CD8-positive, alpha-beta T cell (primary cell): ENCODE measurements at regions of chr5 and their contacts with region 1.

Region 1: DNA sequence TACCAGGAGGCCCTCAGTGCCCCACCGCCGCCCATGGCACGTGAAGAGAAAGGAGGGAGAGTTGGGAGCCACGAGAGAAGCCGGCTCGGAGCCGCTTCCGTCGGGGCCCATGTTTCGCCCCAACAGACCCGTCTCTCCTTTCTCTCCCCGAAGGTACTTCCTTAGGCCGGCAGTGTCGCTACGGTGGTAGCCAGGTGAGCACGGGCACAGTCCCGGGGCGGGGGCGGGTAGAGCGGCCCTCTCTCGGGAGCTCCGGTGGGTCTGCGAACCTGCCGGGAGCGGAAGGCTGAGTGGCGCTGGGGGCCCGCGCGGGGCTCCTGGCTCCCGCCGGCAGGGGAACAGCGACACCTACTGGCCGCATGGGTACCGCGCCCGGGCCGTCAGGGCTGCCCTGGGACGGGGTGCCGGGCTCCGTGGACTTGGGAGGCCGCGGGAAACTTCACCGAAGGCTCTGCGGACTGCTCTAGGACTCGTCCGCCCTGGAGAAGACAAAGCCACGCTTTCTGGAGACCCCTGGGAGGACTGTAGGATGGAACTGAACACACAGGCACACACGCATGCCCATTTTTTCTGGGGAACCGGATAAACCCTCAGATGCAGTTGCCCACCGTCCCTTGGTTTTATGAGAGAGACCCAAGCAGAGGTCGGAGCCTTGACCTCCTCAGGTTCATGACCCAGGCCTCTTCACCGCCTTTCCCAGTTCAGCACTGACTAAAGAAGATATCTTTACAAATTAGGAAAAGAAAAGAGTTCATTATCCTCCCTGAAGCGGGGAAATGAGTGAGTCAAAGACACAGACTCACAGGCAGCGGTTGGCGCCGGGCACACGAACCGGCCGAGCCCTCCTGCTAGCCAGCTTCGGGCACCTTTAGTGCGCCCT is 202.5 kb downstream of the MEF2C start:
- DNase-seq: peak; percentile 59 to 88 (median 78)
- ATAC-seq: peak; percentile 82
- H3K4me3 ChIP-seq: peak overlapping the region; percentile 29 to 36
- H3K4me3 Mint-ChIP-seq: peak overlapping the region; percentile 61
- H3K27ac ChIP-seq: no peak overlapping the region
- H3K27ac Mint-ChIP-seq: no peak overlapping the region
- H3K4me1 ChIP-seq: peaks cover 22% of the 10 kb centered on the region
- H3K4me1 Mint-ChIP-seq: peaks cover 20% of the 10 kb centered on the region
- H3K27me3 ChIP-seq: peaks cover 61 to 62% of the 10 kb centered on the region in 2 experiments
- H3K27me3 Mint-ChIP-seq: peaks cover 75% of the 10 kb centered on the region
- CTCF ChIP-seq: peak; percentile 89

Region 2: DNA sequence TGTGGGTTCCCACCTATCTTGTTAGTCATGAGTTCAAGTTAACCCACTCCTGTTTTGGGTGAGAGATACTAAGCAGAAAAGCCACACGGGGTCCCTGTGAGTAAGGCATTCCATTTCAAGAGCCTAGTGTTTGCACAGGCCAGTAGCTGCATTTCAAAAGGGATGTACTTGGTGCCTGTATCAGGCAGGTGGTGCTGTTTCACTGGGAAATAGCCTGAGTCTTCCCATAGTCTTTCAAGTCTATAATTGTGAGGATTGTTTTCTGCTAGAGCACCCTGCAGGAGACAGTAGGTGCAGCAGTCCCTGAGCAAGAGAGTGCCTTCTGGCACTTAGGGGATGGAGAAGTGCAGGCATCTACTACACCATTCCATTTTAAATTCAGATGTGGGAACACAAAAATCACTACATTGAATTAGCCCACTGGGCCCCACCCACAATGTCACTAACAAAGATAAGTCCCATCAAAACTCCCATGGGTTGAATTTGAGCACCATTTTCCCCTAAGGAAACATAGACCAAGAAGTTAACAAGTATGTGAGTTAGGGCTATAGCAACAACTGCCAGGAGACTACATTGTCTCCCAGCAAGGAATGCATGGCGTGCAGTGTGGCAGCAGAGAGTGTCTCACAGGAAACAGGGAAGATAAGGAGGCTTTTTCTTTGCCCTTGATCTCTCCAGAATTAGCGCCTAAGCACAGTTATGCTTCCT is 1799.6 kb before region 1 on chr5:
- CTCF ChIA-PET with region 1: no interaction called
- POLR2A ChIA-PET with region 1: no interaction called
- intact Hi-C with region 1: loop called in 1 of 2 experiments (anchors 2 kb)
- DNase-seq: peak in 7 of 9 experiments; percentile 1 to 60 (median 16)
- ATAC-seq: peak; percentile 66
- H3K4me3 ChIP-seq: no peak overlapping the region
- H3K4me3 Mint-ChIP-seq: no peak overlapping the region
- H3K27ac ChIP-seq: no peak overlapping the region
- H3K27ac Mint-ChIP-seq: no peak overlapping the region
- H3K4me1 ChIP-seq: no peaks in the 10 kb centered on the region
- H3K4me1 Mint-ChIP-seq: no peaks in the 10 kb centered on the region
- H3K27me3 ChIP-seq: no peaks in the 10 kb centered on the region
- H3K27me3 Mint-ChIP-seq: peaks cover 2% of the 10 kb centered on the region
- CTCF ChIP-seq: no peak

Region 3: DNA sequence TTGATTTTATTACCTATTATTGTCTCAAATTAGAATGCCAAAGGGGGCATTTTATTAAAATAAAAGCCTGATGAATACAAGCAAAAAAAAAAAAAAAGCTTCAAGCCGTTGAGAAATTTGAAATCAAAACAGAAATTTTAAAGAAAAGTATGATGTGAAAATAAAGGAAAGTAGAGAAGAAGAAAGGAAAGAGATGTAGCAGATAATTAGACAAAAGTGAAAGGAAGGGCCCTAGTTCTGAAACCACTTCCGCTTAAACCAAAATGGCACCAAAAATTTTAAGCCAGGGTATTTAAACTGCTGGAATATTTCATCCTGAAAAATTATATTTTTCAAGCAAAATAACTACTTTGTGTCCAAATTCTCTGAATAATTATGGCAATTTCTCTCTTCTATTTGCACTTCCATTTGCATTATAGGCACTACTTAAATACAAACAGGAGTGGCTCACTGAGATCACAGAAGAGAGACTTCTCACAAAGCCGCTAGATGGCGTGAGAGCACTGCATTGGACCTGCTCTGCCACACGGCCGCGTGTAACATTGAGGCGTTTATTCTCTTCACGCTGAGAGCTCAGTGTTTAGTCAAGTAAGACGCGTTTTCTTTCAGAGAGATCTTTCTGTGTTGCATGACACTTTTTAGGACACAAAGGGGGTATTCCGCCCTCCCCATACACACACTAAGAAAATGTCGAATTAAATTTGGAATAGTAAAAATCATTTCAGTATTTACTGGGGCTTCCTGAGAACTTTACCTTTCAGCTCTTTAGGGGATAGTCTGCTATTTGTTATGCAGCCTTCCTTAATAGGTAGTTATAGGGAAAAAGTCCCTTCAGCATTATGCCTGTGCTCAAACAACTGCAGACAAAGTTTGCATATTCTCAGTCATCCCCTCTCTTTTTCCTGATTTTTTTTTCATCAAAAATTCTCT is 899.4 kb before region 1 on chr5:
- CTCF ChIA-PET with region 1: interaction called, 93 read pairs
- POLR2A ChIA-PET with region 1: no interaction called
- intact Hi-C with region 1: loop called (anchors 1 kb)
- DNase-seq: peak; percentile 46 to 86 (median 77)
- ATAC-seq: peak; percentile 99
- H3K4me3 ChIP-seq: no peak overlapping the region
- H3K4me3 Mint-ChIP-seq: no peak overlapping the region
- H3K27ac ChIP-seq: no peak overlapping the region
- H3K27ac Mint-ChIP-seq: no peak overlapping the region
- H3K4me1 ChIP-seq: no peaks in the 10 kb centered on the region
- H3K4me1 Mint-ChIP-seq: no peaks in the 10 kb centered on the region
- H3K27me3 ChIP-seq: peaks cover 3 to 8% of the 10 kb centered on the region in 2 experiments
- H3K27me3 Mint-ChIP-seq: peaks cover 17% of the 10 kb centered on the region
- CTCF ChIP-seq: peak; percentile 81

Region 4: DNA sequence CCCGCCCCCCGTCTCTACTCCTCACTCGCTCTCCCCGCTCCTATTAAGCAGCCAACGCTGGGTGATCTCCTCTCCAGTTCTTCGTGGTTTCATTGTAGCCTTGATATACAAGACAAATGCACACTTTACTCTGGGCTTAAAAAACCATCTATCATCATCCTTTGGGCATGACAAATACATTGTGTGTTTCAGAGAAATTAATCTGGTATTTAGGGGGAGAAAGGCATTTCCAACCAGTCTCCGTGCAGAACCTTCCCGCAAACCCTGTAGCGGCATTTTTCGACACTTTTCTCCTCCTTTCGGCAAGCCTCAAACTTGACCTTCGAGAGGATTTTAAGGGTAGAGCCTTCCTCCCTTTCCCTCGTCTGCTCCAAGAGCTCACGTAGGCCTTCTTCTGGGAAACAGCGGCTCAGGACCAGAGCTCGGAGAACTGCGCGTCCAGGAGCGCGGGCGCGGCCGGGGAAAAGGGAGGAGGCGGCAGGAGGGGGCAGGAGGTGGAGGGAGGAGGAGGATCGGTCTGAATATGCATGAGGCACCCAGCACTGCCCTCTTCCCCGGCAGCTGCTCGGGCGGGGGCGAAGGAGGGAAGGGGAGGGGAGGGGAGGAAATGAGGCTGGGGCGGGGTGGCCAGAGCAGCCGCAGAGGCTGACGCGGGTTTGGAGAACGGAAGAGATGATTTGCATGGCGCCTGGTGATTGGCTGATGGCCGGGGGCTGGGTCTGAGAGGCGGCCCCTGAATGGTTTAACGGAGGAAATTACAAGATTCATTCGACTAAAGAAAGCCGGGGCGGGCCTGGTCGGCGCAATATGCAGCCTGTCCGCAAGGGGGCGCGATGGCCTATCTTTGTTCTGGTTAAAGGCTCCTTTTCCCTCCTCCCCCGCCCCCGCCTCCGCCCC is 539.4 kb before region 1 on chr5:
- CTCF ChIA-PET with region 1: no interaction called
- POLR2A ChIA-PET with region 1: no interaction called
- intact Hi-C with region 1: loop called (anchors 5 kb)
- DNase-seq: peak; percentile 62 to 93 (median 80)
- ATAC-seq: peak; percentile 90
- H3K4me3 ChIP-seq: peak overlapping the region; percentile 42 to 53
- H3K4me3 Mint-ChIP-seq: no peak overlapping the region
- H3K27ac ChIP-seq: no peak overlapping the region
- H3K27ac Mint-ChIP-seq: no peak overlapping the region
- H3K4me1 ChIP-seq: peaks cover 39% of the 10 kb centered on the region
- H3K4me1 Mint-ChIP-seq: peaks cover 18% of the 10 kb centered on the region
- H3K27me3 ChIP-seq: peaks cover 19 to 50% of the 10 kb centered on the region in 2 experiments
- H3K27me3 Mint-ChIP-seq: peaks cover 39% of the 10 kb centered on the region
- CTCF ChIP-seq: peak; percentile 46

Region 5: GRCh38 chr5:88268385-88269184 is 411.9 kb before region 1 on chr5 and contains the start of gene TMEM161B:
- CTCF ChIA-PET with region 1: no interaction called
- POLR2A ChIA-PET with region 1: no interaction called
- intact Hi-C with region 1: loop called (anchors 5 kb)
- DNase-seq: peak; percentile 91 to 99 (median 95)
- ATAC-seq: peak; percentile 96
- H3K4me3 ChIP-seq: peak within 1 kb of the TSS; percentile 76 to 94
- H3K4me3 Mint-ChIP-seq: peak within 1 kb of the TSS; percentile 99
- H3K27ac ChIP-seq: peak within 1 kb of the TSS; percentile 89 to 96
- H3K27ac Mint-ChIP-seq: peak within 1 kb of the TSS; percentile 100
- H3K4me1 ChIP-seq: peaks cover 25% of the 10 kb centered on the region
- H3K4me1 Mint-ChIP-seq: peaks cover 74% of the 10 kb centered on the region
- H3K27me3 ChIP-seq: no peaks in the 10 kb centered on the region
- H3K27me3 Mint-ChIP-seq: no peaks in the 10 kb centered on the region
- CTCF ChIP-seq: no peak
- total RNA-seq, gene TMEM161B: 18.9 to 20.8 TPM

Region 6: GRCh38 chr5:88450239-88450638 is 230.3 kb before region 1 on chr5:
- CTCF ChIA-PET with region 1: no interaction called
- POLR2A ChIA-PET with region 1: no interaction called
- intact Hi-C with region 1: no loop called
- DNase-seq: no peak
- ATAC-seq: no peak
- H3K4me3 ChIP-seq: no peak overlapping the region
- H3K4me3 Mint-ChIP-seq: no peak overlapping the region
- H3K27ac ChIP-seq: no peak overlapping the region
- H3K27ac Mint-ChIP-seq: no peak overlapping the region
- H3K4me1 ChIP-seq: no peaks in the 10 kb centered on the region
- H3K4me1 Mint-ChIP-seq: no peaks in the 10 kb centered on the region
- H3K27me3 ChIP-seq: peaks cover 0 to 2% of the 10 kb centered on the region in 2 experiments
- H3K27me3 Mint-ChIP-seq: peaks cover 10% of the 10 kb centered on the region
- CTCF ChIP-seq: no peak

Region 7: GRCh38 chr5:88490874-88491273 is 189.6 kb before region 1 on chr5:
- CTCF ChIA-PET with region 1: no interaction called
- POLR2A ChIA-PET with region 1: no interaction called
- intact Hi-C with region 1: no loop called
- DNase-seq: no peak
- ATAC-seq: no peak
- H3K4me3 ChIP-seq: no peak overlapping the region
- H3K4me3 Mint-ChIP-seq: no peak overlapping the region
- H3K27ac ChIP-seq: no peak overlapping the region
- H3K27ac Mint-ChIP-seq: no peak overlapping the region
- H3K4me1 ChIP-seq: no peaks in the 10 kb centered on the region
- H3K4me1 Mint-ChIP-seq: no peaks in the 10 kb centered on the region
- H3K27me3 ChIP-seq: no peaks in the 10 kb centered on the region
- H3K27me3 Mint-ChIP-seq: peaks cover 22% of the 10 kb centered on the region
- CTCF ChIP-seq: no peak

Region 8: GRCh38 chr5:88690409-88691229 is 10.1 kb after region 1 on chr5:
- CTCF ChIA-PET with region 1: interaction called, 25 read pairs
- POLR2A ChIA-PET with region 1: interaction called, 3 read pairs
- intact Hi-C with region 1: no loop called
- DNase-seq: peak; percentile 29 to 76 (median 63)
- ATAC-seq: peak; percentile 90
- H3K4me3 ChIP-seq: peak overlapping the region in 1 of 2 experiments; percentile 20
- H3K4me3 Mint-ChIP-seq: peak overlapping the region; percentile 74
- H3K27ac ChIP-seq: no peak overlapping the region
- H3K27ac Mint-ChIP-seq: no peak overlapping the region
- H3K4me1 ChIP-seq: peaks cover 14% of the 10 kb centered on the region
- H3K4me1 Mint-ChIP-seq: peaks cover 16% of the 10 kb centered on the region
- H3K27me3 ChIP-seq: peaks cover 56 to 60% of the 10 kb centered on the region in 2 experiments
- H3K27me3 Mint-ChIP-seq: peaks cover 91% of the 10 kb centered on the region
- CTCF ChIP-seq: peak; percentile 89

Region 9: GRCh38 chr5:88883059-88883835 is 202.8 kb after region 1 on chr5 and contains the start of gene MEF2C:
- CTCF ChIA-PET with region 1: no interaction called
- POLR2A ChIA-PET with region 1: no interaction called
- intact Hi-C with region 1: no loop called
- DNase-seq: peak in 4 of 9 experiments; percentile 9 to 44 (median 14)
- ATAC-seq: no peak
- H3K4me3 ChIP-seq: peak within 1 kb of the TSS; percentile 40 to 41
- H3K4me3 Mint-ChIP-seq: peak within 1 kb of the TSS; percentile 87
- H3K27ac ChIP-seq: no peak within 1 kb of the TSS
- H3K27ac Mint-ChIP-seq: peak within 1 kb of the TSS; percentile 60
- H3K4me1 ChIP-seq: peaks cover 10% of the 10 kb centered on the region
- H3K4me1 Mint-ChIP-seq: peaks cover 20% of the 10 kb centered on the region
- H3K27me3 ChIP-seq: peaks cover 0 to 6% of the 10 kb centered on the region in 2 experiments
- H3K27me3 Mint-ChIP-seq: peaks cover 34% of the 10 kb centered on the region
- CTCF ChIP-seq: no peak
- total RNA-seq, gene MEF2C: 1.6 TPM